CD8-positive, alpha-beta T cell (primary cell): ENCODE measurements at regions of chr3 and their contacts with region 1.

Region 1: DNA sequence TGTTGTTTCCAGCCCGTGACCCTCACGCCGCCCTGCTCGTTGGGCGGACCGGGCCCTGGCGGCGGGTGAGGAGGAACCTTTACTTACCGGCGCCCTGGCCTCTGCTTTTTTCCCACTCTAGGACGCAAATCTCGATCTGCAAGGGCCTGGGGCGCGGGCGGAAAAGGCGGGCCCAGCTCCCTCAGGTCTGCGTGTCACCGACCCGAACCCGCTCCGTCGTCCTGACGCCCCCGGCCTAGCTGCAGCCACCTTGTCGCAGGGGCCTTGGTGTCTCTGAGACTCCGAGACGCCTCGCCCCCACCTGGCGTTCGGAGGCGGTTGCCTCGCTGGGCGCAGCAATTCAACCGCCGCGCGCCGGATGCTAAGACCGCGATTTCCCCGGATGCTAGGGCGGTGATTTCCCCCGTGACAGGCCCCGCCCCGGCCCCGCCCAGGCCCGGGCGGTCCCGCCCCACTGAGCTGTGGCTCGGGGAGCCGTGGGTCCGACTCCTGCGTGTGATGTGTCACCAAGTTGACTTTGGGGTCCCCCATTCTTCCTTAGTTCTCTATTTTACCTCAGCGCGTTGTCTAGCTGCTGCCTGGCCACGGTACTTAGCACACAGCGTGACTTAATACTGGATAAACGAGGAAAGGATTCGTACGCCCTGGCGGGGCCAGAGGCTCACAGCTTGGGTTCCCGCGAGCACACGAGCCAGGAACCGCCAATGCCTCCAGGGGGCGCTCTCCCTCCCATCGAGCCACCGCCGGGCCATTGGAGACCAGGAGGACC is at the start of gene RPL39L:
- DNase-seq: peak; percentile 88 to 97 (median 92)
- ATAC-seq: peak; percentile 96
- H3K4me3 ChIP-seq: peak within 1 kb of the TSS; percentile 65 to 77
- H3K4me3 Mint-ChIP-seq: peak within 1 kb of the TSS; percentile 92
- H3K27ac ChIP-seq: peak within 1 kb of the TSS; percentile 69 to 83
- H3K27ac Mint-ChIP-seq: peak within 1 kb of the TSS; percentile 95
- H3K4me1 ChIP-seq: peaks cover 11% of the 10 kb centered on the region
- H3K4me1 Mint-ChIP-seq: peaks cover 19% of the 10 kb centered on the region
- H3K27me3 ChIP-seq: no peaks in the 10 kb centered on the region
- H3K27me3 Mint-ChIP-seq: no peaks in the 10 kb centered on the region
- CTCF ChIP-seq: peak; percentile 70
- total RNA-seq, gene RPL39L: 0.65 to 0.94 TPM

Region 2: DNA sequence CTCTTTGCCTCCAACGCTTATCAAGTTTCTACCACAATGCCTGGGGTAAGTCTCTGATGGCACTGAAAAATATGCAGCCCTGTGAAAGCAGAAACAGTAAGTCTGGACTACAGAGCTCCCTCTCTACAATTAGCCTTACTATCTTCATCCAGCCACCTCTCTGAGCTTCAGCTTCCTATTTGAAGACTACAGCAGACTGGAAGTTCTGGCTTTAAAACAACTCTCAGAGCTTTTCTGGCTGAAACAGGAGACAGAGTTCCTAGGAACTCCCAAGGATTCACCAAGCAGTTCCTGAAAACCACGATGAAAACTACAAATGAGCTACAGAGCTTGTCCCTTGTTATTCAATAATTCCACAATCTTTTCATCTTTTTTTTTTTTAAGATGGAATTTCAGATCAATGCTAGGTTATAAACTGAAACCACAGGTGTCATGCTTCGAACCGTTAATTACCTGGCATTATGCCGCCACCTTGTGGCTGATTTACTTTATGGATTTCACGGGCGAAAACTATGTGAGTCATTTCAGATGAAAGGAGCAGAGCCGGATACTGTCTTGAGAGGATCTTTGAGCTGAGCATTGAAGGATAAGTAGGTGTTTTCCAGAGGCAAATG is 599.0 kb before region 1 on chr3:
- CTCF ChIA-PET with region 1: no interaction called
- POLR2A ChIA-PET with region 1: no interaction called
- intact Hi-C with region 1: no loop called
- DNase-seq: peak; percentile 63 to 90 (median 83)
- ATAC-seq: peak; percentile 96
- H3K4me3 ChIP-seq: no peak overlapping the region
- H3K4me3 Mint-ChIP-seq: no peak overlapping the region
- H3K27ac ChIP-seq: no peak overlapping the region
- H3K27ac Mint-ChIP-seq: peak overlapping the region; percentile 7
- H3K4me1 ChIP-seq: peaks cover 6% of the 10 kb centered on the region
- H3K4me1 Mint-ChIP-seq: peaks cover 11% of the 10 kb centered on the region
- H3K27me3 ChIP-seq: no peaks in the 10 kb centered on the region
- H3K27me3 Mint-ChIP-seq: no peaks in the 10 kb centered on the region
- CTCF ChIP-seq: peak; percentile 80

Region 3: GRCh38 chr3:186570096-186570940 is 569.0 kb before region 1 on chr3 and contains the start of gene DNAJB11:
- CTCF ChIA-PET with region 1: no interaction called
- POLR2A ChIA-PET with region 1: no interaction called
- intact Hi-C with region 1: loop called (anchors 5 to 10 kb)
- DNase-seq: peak; percentile 94 to 100 (median 97)
- ATAC-seq: peak; percentile 82
- H3K4me3 ChIP-seq: peak within 1 kb of the TSS; percentile 73 to 96
- H3K4me3 Mint-ChIP-seq: peak within 1 kb of the TSS; percentile 94
- H3K27ac ChIP-seq: peak within 1 kb of the TSS; percentile 94 to 97
- H3K27ac Mint-ChIP-seq: peak within 1 kb of the TSS; percentile 98
- H3K4me1 ChIP-seq: peaks cover 30% of the 10 kb centered on the region
- H3K4me1 Mint-ChIP-seq: peaks cover 59% of the 10 kb centered on the region
- H3K27me3 ChIP-seq: no peaks in the 10 kb centered on the region
- H3K27me3 Mint-ChIP-seq: no peaks in the 10 kb centered on the region
- CTCF ChIP-seq: no peak
- total RNA-seq, gene DNAJB11: 70.2 to 73.4 TPM

Region 4: GRCh38 chr3:186909078-186909853 is 230.0 kb before region 1 on chr3:
- CTCF ChIA-PET with region 1: interaction called, 4 read pairs
- POLR2A ChIA-PET with region 1: interaction called, 5 read pairs
- intact Hi-C with region 1: loop called (anchors 2 to 5 kb)
- DNase-seq: peak; percentile 60 to 91 (median 87)
- ATAC-seq: peak; percentile 91
- H3K4me3 ChIP-seq: peak overlapping the region; percentile 23 to 43
- H3K4me3 Mint-ChIP-seq: peak overlapping the region; percentile 72
- H3K27ac ChIP-seq: peak overlapping the region; percentile 53 to 69
- H3K27ac Mint-ChIP-seq: peak overlapping the region; percentile 95
- H3K4me1 ChIP-seq: peaks cover 17% of the 10 kb centered on the region
- H3K4me1 Mint-ChIP-seq: peaks cover 34% of the 10 kb centered on the region
- H3K27me3 ChIP-seq: no peaks in the 10 kb centered on the region
- H3K27me3 Mint-ChIP-seq: no peaks in the 10 kb centered on the region
- CTCF ChIP-seq: no peak

Region 5: GRCh38 chr3:187041362-187042307 is 97.7 kb before region 1 on chr3:
- CTCF ChIA-PET with region 1: no interaction called
- POLR2A ChIA-PET with region 1: interaction called, 4 read pairs
- intact Hi-C with region 1: loop called in 1 of 2 experiments (anchors 5 kb)
- DNase-seq: peak in 8 of 9 experiments; percentile 38 to 84 (median 62)
- ATAC-seq: peak; percentile 95
- H3K4me3 ChIP-seq: peak overlapping the region in 1 of 2 experiments; percentile 5
- H3K4me3 Mint-ChIP-seq: peak overlapping the region; percentile 49
- H3K27ac ChIP-seq: peak overlapping the region; percentile 44 to 86
- H3K27ac Mint-ChIP-seq: peak overlapping the region; percentile 95
- H3K4me1 ChIP-seq: peaks cover 80% of the 10 kb centered on the region
- H3K4me1 Mint-ChIP-seq: peaks cover 82% of the 10 kb centered on the region
- H3K27me3 ChIP-seq: no peaks in the 10 kb centered on the region
- H3K27me3 Mint-ChIP-seq: no peaks in the 10 kb centered on the region
- CTCF ChIP-seq: no peak

Region 6: DNA sequence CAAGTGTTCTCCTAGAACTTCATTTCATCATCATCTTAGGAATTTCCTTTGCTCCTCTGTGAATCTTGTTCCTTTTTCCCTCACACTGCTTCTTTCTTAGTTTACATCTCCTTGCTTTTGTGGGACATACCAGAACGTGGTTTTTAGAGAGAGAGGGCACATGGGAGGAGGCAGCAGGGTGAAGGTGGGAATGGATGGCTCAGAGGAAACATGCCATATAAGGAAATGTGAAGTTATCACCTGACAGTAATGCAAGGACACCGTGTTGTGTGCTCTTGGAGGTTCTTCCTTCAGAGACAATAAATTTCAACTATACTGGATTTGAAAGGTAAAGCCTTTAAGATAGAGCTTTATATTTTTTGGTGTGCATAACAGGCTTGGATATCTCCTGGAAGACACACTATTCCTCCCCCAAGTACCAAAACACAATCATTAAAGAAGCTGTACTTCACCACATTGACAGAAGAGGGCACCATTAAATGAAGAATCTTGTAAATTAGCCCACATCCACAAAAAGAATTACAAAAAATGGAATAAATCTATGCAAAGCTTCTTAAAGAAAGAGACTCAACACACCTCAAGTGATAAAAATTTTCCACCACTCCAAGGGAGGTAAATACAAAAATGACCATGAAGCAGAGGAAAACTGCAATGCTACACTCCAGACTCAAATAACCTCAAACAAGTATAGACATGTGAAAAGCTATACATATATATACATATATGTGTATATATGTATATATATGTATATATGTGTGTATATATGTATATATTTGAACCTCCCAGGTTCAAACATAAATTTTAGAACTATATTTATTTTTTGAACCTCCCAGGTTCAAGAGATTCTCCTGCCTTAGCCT is 26.1 kb before region 1 on chr3:
- CTCF ChIA-PET with region 1: interaction called, 41 read pairs
- POLR2A ChIA-PET with region 1: interaction called, 7 read pairs
- intact Hi-C with region 1: loop called in 1 of 2 experiments (anchors 1 kb)
- DNase-seq: peak in 2 of 9 experiments; percentile 61 to 70
- ATAC-seq: peak; percentile 58
- H3K4me3 ChIP-seq: no peak overlapping the region
- H3K4me3 Mint-ChIP-seq: no peak overlapping the region
- H3K27ac ChIP-seq: no peak overlapping the region
- H3K27ac Mint-ChIP-seq: no peak overlapping the region
- H3K4me1 ChIP-seq: no peaks in the 10 kb centered on the region
- H3K4me1 Mint-ChIP-seq: peaks cover 7% of the 10 kb centered on the region
- H3K27me3 ChIP-seq: no peaks in the 10 kb centered on the region
- H3K27me3 Mint-ChIP-seq: no peaks in the 10 kb centered on the region
- CTCF ChIP-seq: peak; percentile 81

Region 7: GRCh38 chr3:187150599-187150998 is 11.3 kb after region 1 on chr3:
- CTCF ChIA-PET with region 1: interaction called, 54 read pairs
- POLR2A ChIA-PET with region 1: no interaction called
- intact Hi-C with region 1: loop called in 1 of 2 experiments (anchors 1 kb)
- DNase-seq: peak; percentile 37 to 80 (median 65)
- ATAC-seq: peak; percentile 56
- H3K4me3 ChIP-seq: no peak overlapping the region
- H3K4me3 Mint-ChIP-seq: no peak overlapping the region
- H3K27ac ChIP-seq: no peak overlapping the region
- H3K27ac Mint-ChIP-seq: no peak overlapping the region
- H3K4me1 ChIP-seq: no peaks in the 10 kb centered on the region
- H3K4me1 Mint-ChIP-seq: peaks cover 9% of the 10 kb centered on the region
- H3K27me3 ChIP-seq: no peaks in the 10 kb centered on the region
- H3K27me3 Mint-ChIP-seq: no peaks in the 10 kb centered on the region
- CTCF ChIP-seq: peak; percentile 39

Region 8: DNA sequence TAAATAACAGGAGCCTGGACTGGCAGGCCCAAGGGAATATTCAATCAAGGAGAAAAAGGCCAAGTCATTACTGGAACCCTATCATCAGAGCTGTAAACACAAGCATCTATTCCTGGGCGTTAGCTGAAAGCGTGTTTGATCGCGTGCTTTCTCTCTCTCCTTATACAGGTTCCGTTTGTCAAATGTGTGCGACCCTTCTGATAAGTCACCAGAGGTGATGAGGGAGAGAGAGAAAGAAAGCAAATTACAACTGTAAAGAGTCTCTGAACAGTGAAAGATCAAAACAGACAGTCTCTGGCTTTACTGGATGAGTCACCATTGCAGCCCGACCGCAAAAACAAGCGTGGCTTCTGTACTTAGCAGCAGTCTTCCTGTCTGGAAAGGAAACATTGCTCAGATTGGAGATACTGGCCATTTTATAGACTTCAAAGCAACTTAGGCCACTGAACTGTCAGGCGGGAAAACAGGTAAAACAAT is 1993.0 kb after region 1 on chr3:
- CTCF ChIA-PET with region 1: no interaction called
- POLR2A ChIA-PET with region 1: no interaction called
- intact Hi-C with region 1: loop called in 1 of 2 experiments (anchors 10 kb)
- DNase-seq: peak; percentile 51 to 93 (median 78)
- ATAC-seq: peak; percentile 92
- H3K4me3 ChIP-seq: peak overlapping the region in 1 of 2 experiments; percentile 4
- H3K4me3 Mint-ChIP-seq: peak overlapping the region; percentile 71
- H3K27ac ChIP-seq: peak overlapping the region; percentile 47 to 86
- H3K27ac Mint-ChIP-seq: peak overlapping the region; percentile 97
- H3K4me1 ChIP-seq: peaks cover 24% of the 10 kb centered on the region
- H3K4me1 Mint-ChIP-seq: peaks cover 30% of the 10 kb centered on the region
- H3K27me3 ChIP-seq: no peaks in the 10 kb centered on the region
- H3K27me3 Mint-ChIP-seq: no peaks in the 10 kb centered on the region
- CTCF ChIP-seq: no peak